OCI-LY7 (cell line): ENCODE measurements at regions of chr17 and their contacts with region 1.

Region 1: GRCh38 chr17:2786176-2786881 is 9.9 kb upstream of the RAP1GAP2 start:
- DNase-seq: peak; percentile 92
- H3K4me3 ChIP-seq: no peak overlapping the region
- H3K27ac ChIP-seq: no peak overlapping the region
- H3K4me1 ChIP-seq: peaks cover 4% of the 10 kb centered on the region
- CTCF ChIP-seq: peak; percentile 94

Region 2: GRCh38 chr17:2736956-2737355 is 49.4 kb before region 1 on chr17:
- CTCF ChIA-PET with region 1: no interaction called
- POLR2A ChIA-PET with region 1: no interaction called
- intact Hi-C with region 1: no loop called
- DNase-seq: no peak
- H3K4me3 ChIP-seq: no peak overlapping the region
- H3K27ac ChIP-seq: no peak overlapping the region
- H3K4me1 ChIP-seq: no peaks in the 10 kb centered on the region
- CTCF ChIP-seq: no peak

Region 3: GRCh38 chr17:2814481-2815341 is 28.4 kb after region 1 on chr17:
- CTCF ChIA-PET with region 1: interaction called, 5 read pairs
- POLR2A ChIA-PET with region 1: interaction called, 5 read pairs
- intact Hi-C with region 1: loop called (anchors 2 kb)
- DNase-seq: peak; percentile 89
- H3K4me3 ChIP-seq: peak overlapping the region; percentile 65
- H3K27ac ChIP-seq: peak overlapping the region; percentile 40
- H3K4me1 ChIP-seq: peaks cover 21% of the 10 kb centered on the region
- CTCF ChIP-seq: no peak

Region 4: GRCh38 chr17:2828397-2829038 is 42.2 kb after region 1 on chr17:
- CTCF ChIA-PET with region 1: no interaction called
- POLR2A ChIA-PET with region 1: no interaction called
- intact Hi-C with region 1: loop called (anchors 2 kb)
- DNase-seq: peak; percentile 87
- H3K4me3 ChIP-seq: no peak overlapping the region
- H3K27ac ChIP-seq: no peak overlapping the region
- H3K4me1 ChIP-seq: peaks cover 26% of the 10 kb centered on the region
- CTCF ChIP-seq: peak; percentile 88

Region 5: GRCh38 chr17:2837147-2837561 is 50.8 kb after region 1 on chr17:
- CTCF ChIA-PET with region 1: interaction called, 13 read pairs
- POLR2A ChIA-PET with region 1: no interaction called
- intact Hi-C with region 1: loop called (anchors 2 kb)
- DNase-seq: peak; percentile 78
- H3K4me3 ChIP-seq: no peak overlapping the region
- H3K27ac ChIP-seq: no peak overlapping the region
- H3K4me1 ChIP-seq: peaks cover 13% of the 10 kb centered on the region
- CTCF ChIP-seq: peak; percentile 68

Region 6: GRCh38 chr17:2883567-2884101 is 97.3 kb after region 1 on chr17:
- CTCF ChIA-PET with region 1: no interaction called
- POLR2A ChIA-PET with region 1: no interaction called
- intact Hi-C with region 1: no loop called
- DNase-seq: no peak
- H3K4me3 ChIP-seq: no peak overlapping the region
- H3K27ac ChIP-seq: no peak overlapping the region
- H3K4me1 ChIP-seq: peaks cover 10% of the 10 kb centered on the region
- CTCF ChIP-seq: no peak